Aorta (tissue), 5 donors: ENCODE measurements at regions of chr7 and their contacts with region 1.

Region 1: DNA sequence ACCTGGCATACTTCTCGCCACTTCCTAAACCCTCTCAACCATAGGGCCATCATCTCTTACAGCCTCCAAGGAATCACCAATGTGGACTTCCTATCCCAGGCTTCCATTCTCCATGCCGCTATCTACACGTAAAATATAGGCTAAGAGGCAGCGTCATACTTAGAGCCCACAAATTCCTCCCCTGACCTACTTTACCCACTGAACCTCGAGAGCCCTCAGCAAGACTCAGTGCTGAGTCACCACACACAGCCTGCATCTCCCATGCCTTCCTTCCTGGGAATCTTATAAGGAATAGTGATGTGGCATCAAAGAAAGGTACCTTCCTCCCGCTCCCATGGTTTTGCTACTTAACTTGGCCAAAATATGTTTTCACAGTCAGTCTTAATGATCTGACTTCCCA is 435.6 kb upstream of the NFE2L3 start:
- DNase-seq: no peak
- ATAC-seq: no peak
- H3K4me3 ChIP-seq: no peak overlapping the region
- H3K27ac ChIP-seq: no peak overlapping the region
- H3K4me1 ChIP-seq: peaks cover 3 to 6% of the 10 kb centered on the region in 2 donors
- H3K27me3 ChIP-seq: no peaks in the 10 kb centered on the region

Region 2: DNA sequence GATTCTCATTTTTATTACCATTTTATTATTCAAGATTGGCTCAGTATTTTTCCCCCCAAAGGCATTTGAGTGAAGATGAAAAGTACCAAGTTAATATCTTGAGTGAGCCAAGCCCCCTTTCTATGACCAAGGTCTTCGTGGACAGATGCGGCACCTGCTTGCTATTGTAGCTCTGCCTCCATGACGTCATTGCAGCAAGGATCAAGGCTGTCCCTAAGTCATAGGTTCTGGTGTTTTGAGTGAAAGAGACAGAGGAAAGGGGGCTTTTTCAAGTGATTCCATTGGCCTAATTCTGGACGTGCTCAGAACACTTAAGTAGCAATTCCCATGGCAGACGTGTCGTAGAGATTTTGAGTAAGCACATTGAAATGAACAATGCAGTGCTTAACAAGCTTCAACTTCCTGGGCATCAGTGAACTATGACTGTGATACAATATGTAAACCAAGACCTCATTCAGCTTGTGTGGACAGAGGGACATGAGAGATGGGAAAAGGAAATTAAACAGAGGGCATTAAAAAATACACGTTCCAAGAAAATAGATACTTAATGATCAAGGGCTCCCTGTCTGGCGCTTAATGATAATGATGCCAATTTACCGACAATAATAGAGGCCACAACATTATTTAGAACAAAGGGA is 239.4 kb before region 1 on chr7:
- intact Hi-C with region 1: no loop called
- DNase-seq: no peak
- ATAC-seq: no peak
- H3K4me3 ChIP-seq: no peak overlapping the region
- H3K27ac ChIP-seq: no peak overlapping the region
- H3K4me1 ChIP-seq: no peaks in the 10 kb centered on the region
- H3K27me3 ChIP-seq: no peaks in the 10 kb centered on the region

Region 3: DNA sequence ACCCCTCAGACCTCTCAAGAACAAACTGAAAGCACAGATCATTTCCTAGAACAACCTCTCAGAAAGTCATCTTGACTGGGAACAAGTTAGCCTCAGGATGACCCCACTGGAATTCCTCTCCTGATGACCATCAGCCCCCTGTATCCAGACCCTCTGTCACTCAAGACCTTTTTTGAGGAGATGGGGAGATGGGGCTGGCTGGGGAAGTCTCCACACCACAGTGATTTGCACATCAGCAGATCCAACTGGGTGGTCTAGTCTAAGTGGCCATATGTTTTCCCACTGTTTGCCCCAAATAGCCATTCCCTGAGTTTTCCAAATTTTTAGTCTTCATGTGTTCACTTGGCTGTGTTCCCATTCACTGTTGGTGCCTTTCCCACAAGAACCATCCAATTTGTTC is 35.8 kb before region 1 on chr7:
- intact Hi-C with region 1: loop called in 1 of 2 experiments (anchors 5 kb)
- DNase-seq: no peak
- ATAC-seq: no peak
- H3K4me3 ChIP-seq: no peak overlapping the region
- H3K27ac ChIP-seq: no peak overlapping the region
- H3K4me1 ChIP-seq: no peaks in the 10 kb centered on the region
- H3K27me3 ChIP-seq: no peaks in the 10 kb centered on the region